ENCODE measurements at regions of chr2 and their contacts with region 1.

Region 1: DNA sequence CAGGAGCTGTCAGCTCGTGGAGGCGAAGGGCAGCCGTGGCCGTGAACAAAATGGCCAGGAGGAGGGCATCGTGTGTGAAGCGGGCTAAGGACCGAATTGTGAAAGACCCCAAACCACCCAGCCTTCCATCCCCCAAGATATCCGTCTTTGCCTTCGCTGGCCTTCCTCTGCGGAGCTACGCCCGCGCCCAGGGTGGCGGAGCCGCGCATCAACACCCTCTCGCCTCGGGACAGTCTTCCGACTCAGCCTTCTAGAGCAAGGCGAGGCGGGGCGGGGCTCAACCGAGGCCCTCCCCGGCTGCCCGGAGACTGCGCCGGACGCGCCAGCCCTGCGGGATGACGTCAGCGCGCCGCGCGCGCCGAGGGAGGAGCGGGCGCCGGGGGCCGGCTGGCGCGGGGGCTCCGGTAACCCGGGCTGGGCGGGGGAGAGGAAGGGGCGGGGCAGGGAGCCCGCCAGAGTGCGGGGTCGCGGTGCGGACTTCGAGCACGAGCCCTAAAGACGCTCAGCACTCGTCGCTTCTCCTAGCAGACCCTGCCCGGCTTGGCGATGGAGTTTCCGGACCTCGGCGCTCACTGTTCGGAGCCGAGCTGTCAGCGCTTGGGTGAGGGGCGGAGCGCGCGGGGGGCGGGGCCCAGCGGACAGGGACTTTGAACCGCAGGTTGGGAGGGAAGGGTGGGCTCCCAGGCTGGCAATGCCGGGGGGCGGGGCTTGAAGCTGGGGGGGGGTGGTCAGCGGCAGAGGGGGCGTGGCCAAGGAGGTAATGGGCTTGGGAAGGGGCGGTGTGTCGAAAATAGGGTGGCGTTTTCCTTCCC is at the start of gene ZFAND2B:
- DNase-seq: peak; percentile 96
- H3K4me3 ChIP-seq: peak within 1 kb of the TSS; percentile 75
- H3K27ac ChIP-seq: peak within 1 kb of the TSS; percentile 78
- H3K4me1 ChIP-seq: peaks cover 15% of the 10 kb centered on the region
- H3K27me3 ChIP-seq: no peaks in the 10 kb centered on the region
- CTCF ChIP-seq: no peak
- total RNA-seq, gene ZFAND2B: 20.0 and 23.7 TPM in 2 replicates

Region 2: DNA sequence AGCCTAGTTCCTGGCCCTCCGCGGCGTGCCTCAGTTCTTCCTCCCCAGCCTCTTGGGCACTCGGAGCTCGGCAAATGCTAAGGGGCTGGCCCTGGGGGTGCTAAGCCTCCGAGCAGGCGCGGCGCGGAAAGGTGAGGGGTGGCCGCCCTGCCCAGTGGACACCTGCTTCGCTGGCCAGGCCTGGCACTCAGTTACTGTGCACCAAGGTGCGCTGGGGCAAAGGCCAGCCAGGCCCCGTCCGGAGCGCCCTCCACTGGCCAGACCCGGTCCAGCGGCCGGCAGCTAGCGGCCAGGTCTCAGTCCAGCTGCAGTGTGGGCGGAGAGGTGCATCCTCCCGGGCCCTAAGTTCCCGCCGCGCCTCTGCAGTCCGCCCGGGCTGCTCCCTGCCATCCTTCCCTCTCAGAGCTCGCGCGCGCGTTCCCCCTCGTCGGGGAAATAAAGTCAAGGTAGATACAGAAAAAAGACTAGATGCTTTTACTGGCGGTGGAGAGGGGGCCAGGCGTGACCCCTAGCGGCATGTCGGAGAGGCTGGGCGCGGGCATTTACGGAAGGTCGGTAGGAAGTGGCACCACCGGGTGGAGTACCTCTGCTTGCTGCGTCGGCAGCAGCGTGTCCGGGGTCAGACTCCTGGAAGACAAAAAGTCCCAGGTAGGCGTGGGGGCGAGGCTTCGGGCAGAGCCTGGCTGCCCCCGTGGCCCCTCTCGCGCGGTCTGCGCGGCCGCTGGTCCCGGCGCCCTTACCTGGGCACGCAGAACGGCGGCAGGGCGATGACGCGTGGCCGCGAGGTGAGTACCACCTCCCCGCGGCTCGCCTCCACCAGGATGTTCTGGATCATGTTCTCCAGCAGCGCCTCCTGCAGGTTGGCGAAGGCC is 204.0 kb before region 1 on chr2:
- CTCF ChIA-PET with region 1: interaction called, 12 read pairs
- POLR2A ChIA-PET with region 1: no interaction called
- intact Hi-C with region 1: no loop called
- DNase-seq: peak; percentile 67
- H3K4me3 ChIP-seq: no peak overlapping the region
- H3K27ac ChIP-seq: no peak overlapping the region
- H3K4me1 ChIP-seq: peaks cover 15% of the 10 kb centered on the region
- H3K27me3 ChIP-seq: peaks cover 46% of the 10 kb centered on the region
- CTCF ChIP-seq: peak; percentile 78

Region 3: GRCh38 chr2:220154304-220154703 is 947.7 kb after region 1 on chr2:
- CTCF ChIA-PET with region 1: no interaction called
- POLR2A ChIA-PET with region 1: no interaction called
- intact Hi-C with region 1: no loop called
- DNase-seq: peak; percentile 9
- H3K4me3 ChIP-seq: no peak overlapping the region
- H3K27ac ChIP-seq: no peak overlapping the region
- H3K4me1 ChIP-seq: peaks cover 12% of the 10 kb centered on the region
- H3K27me3 ChIP-seq: no peaks in the 10 kb centered on the region
- CTCF ChIP-seq: peak; percentile 61